Activated CD4-positive, alpha-beta T cell treated with anti-CD3 and anti-CD28 coated beads for 36 hours (primary cell): ENCODE measurements at regions of chr5 and their contacts with region 1.

Region 1: GRCh38 chr5:173293817-173294672 is 34.2 kb downstream of the STC2 start:
- DNase-seq: peak; percentile 87
- ATAC-seq: peak; percentile 85
- H3K4me3 Mint-ChIP-seq: peak overlapping the region; percentile 16
- H3K27ac Mint-ChIP-seq: no peak overlapping the region
- H3K4me1 Mint-ChIP-seq: peaks cover 12% of the 10 kb centered on the region
- H3K27me3 Mint-ChIP-seq: peaks cover 32% of the 10 kb centered on the region

Region 2: DNA sequence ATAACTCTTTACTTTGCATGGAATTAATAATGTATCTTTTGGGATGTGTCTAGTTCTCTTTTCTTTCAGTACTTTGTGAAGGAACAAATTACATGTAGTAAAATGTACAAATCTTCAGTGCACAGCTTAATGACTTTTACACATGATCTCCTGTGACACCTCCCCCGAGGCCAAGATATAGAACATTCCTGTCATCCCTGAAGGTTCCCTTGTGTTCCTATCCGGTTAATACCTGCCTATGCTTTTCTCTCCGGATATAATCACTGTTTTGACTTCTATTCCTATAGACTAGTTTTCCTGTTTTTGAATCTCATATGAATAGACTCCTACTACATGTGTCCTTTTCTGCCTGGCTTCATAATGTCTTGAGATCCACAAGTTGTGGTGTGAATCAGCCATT is 12.6 kb after region 1 on chr5:
- CTCF ChIA-PET with region 1: interaction called, 19 read pairs
- POLR2A ChIA-PET with region 1: no interaction called
- intact Hi-C with region 1: no loop called
- DNase-seq: no peak
- ATAC-seq: no peak
- H3K4me3 Mint-ChIP-seq: no peak overlapping the region
- H3K27ac Mint-ChIP-seq: no peak overlapping the region
- H3K4me1 Mint-ChIP-seq: no peaks in the 10 kb centered on the region
- H3K27me3 Mint-ChIP-seq: peaks cover 24% of the 10 kb centered on the region

Region 3: DNA sequence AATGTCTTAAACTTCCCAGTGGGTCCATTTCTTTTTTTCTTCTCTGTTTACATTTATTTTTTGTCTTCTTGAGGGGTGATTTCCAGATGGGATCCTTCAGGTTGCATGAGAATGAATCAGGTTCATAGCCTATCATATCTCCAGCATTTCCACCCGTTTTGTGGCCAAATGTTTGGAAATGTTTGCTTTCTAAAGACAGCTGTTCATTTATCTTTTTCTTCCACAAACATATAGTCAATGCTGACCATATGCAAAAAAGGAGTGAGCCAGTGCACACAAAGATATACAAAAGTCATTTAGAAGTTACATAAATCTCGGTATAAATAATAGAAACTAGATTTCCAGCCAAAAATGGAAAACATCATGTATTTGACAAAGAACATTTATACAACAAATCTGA is 105.8 kb after region 1 on chr5:
- CTCF ChIA-PET with region 1: no interaction called
- POLR2A ChIA-PET with region 1: no interaction called
- intact Hi-C with region 1: no loop called
- DNase-seq: no peak
- ATAC-seq: no peak
- H3K4me3 Mint-ChIP-seq: no peak overlapping the region
- H3K27ac Mint-ChIP-seq: no peak overlapping the region
- H3K4me1 Mint-ChIP-seq: no peaks in the 10 kb centered on the region
- H3K27me3 Mint-ChIP-seq: peaks cover 4% of the 10 kb centered on the region